Transverse colon (tissue), 4 donors: ENCODE measurements at regions of chr5 and their contacts with region 1.

Region 1: GRCh38 chr5:78537821-78538220 is 110.8 kb downstream of the LHFPL2 start:
- DNase-seq: no peak
- H3K4me3 ChIP-seq: no peak overlapping the region
- H3K27ac ChIP-seq: no peak overlapping the region
- H3K4me1 ChIP-seq: peaks cover 0 to 9% (median 0%) of the 10 kb centered on the region in 4 donors
- H3K27me3 ChIP-seq: no peaks in the 10 kb centered on the region
- CTCF ChIP-seq: peak; percentile 23 to 40 (median 37)
- EP300 ChIP-seq: no peak
- POLR2A ChIP-seq: no peak

Region 2: GRCh38 chr5:78377056-78377717 is 160.6 kb before region 1 on chr5:
- in situ Hi-C with region 1: no loop called
- intact Hi-C with region 1: no loop called
- DNase-seq: no peak
- H3K4me3 ChIP-seq: no peak overlapping the region
- H3K27ac ChIP-seq: no peak overlapping the region
- H3K4me1 ChIP-seq: peaks cover 0 to 9% (median 3%) of the 10 kb centered on the region in 4 donors
- H3K27me3 ChIP-seq: no peaks in the 10 kb centered on the region
- CTCF ChIP-seq: no peak
- EP300 ChIP-seq: no peak
- POLR2A ChIP-seq: no peak

Region 3: DNA sequence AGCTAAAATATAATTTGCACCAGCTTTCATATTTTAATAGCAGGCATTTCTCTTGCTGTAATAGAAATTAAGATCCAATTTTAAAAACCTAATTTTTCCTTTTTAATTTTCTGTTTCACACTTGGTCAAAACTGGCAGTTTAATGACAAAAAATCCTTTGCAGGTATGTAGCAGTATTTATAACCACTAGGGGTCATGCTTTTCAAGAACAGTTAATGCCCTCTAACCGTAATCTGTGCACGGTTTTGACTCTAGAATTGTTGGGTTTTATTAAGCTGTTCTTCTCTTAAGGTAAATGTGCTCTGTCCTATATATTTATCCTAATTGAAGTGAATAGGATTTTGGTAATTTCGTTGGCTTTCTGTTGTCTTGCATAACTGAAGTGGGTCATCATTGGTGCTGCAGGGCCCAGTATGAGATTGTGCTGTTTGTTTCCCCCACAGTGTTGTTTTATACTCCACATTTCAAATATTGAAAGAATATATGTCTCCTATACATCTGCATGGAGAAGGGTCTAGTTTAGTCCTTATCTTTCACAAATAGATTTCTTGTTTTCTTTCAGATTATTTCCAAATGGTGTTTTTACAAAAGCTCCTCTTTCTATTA is 70.0 kb before region 1 on chr5:
- in situ Hi-C with region 1: no loop called
- intact Hi-C with region 1: loop called (anchors 10 kb)
- DNase-seq: no peak
- H3K4me3 ChIP-seq: no peak overlapping the region
- H3K27ac ChIP-seq: no peak overlapping the region
- H3K4me1 ChIP-seq: peaks cover 0 to 5% (median 2%) of the 10 kb centered on the region in 4 donors
- H3K27me3 ChIP-seq: no peaks in the 10 kb centered on the region
- CTCF ChIP-seq: peak; percentile 65 to 79 (median 78)
- EP300 ChIP-seq: no peak
- POLR2A ChIP-seq: no peak

Region 4: DNA sequence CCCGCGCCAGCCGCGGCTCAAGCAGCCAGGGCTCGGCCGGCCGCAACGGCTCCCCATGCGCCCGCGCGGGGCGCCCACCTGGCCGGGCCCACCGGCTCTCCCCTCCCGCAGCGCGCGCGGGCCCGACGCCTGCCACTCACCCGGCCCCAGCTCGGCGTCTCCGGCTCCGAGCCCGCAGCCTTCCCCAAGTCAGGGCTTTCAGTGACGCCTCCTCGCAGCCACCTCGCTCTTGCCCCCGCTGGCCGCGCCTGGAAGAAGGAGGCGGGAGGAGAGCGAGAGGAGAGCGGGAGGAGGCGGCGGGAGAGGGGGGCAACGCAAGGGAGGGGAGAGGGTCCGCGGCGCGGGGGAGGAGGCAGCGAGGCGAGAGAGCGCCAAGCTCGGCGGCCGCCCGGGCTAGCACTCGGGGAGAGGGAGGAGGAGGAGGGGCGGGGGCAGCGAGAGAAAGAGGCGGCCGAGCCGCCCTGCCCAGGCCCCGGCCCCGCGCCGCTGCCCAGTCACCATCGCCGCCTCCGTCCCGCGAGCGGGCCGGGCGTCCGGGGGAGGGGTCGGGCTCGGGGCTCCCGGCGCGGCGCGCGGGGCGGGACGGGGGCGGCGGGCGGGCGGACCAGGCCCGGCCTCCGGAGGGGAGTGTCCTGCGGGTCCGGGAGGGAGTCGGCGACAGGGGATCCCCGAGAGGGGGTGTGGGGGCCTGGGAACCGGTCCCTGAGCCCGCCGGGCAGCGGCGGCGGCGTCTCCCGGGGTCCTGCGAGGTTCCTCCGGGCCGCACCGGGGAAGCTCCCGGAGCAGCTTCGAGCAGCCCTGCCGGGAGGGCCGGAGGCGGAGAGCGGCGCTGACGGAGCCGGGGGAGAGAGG is 110.8 kb after region 1 on chr5 and contains the start of gene LHFPL2:
- in situ Hi-C with region 1: no loop called
- intact Hi-C with region 1: loop called (anchors 5 kb)
- DNase-seq: peak; percentile 76
- H3K4me3 ChIP-seq: peak within 1 kb of the TSS; percentile 80 to 96 (median 87)
- H3K27ac ChIP-seq: peak within 1 kb of the TSS; percentile 94 to 97 (median 96)
- H3K4me1 ChIP-seq: peaks cover 0 to 42% (median 18%) of the 10 kb centered on the region in 4 donors
- H3K27me3 ChIP-seq: no peaks in the 10 kb centered on the region
- CTCF ChIP-seq: no peak
- EP300 ChIP-seq: no peak
- POLR2A ChIP-seq: peak; percentile 56
- total RNA-seq, gene LHFPL2: 34.4 to 79.6 (median 51.5) TPM

Region 5: GRCh38 chr5:78964887-78965286 is 427.1 kb after region 1 on chr5:
- in situ Hi-C with region 1: no loop called
- intact Hi-C with region 1: loop called (anchors 5 kb)
- DNase-seq: no peak
- H3K4me3 ChIP-seq: no peak overlapping the region
- H3K27ac ChIP-seq: no peak overlapping the region
- H3K4me1 ChIP-seq: peaks cover 0 to 10% (median 2%) of the 10 kb centered on the region in 4 donors
- H3K27me3 ChIP-seq: no peaks in the 10 kb centered on the region
- CTCF ChIP-seq: peak; percentile 35 to 63 (median 48)
- EP300 ChIP-seq: no peak
- POLR2A ChIP-seq: no peak

Region 6: GRCh38 chr5:78984439-78985115 is 446.8 kb after region 1 on chr5:
- in situ Hi-C with region 1: loop called in 1 of 4 experiments (anchors 25 kb)
- intact Hi-C with region 1: no loop called
- DNase-seq: peak; percentile 91
- H3K4me3 ChIP-seq: peak overlapping the region; percentile 73 to 97 (median 76)
- H3K27ac ChIP-seq: peak overlapping the region; percentile 97 to 100 (median 98)
- H3K4me1 ChIP-seq: peaks cover 6 to 38% (median 14%) of the 10 kb centered on the region in 4 donors
- H3K27me3 ChIP-seq: no peaks in the 10 kb centered on the region
- CTCF ChIP-seq: peak; percentile 41 to 75 (median 51)
- EP300 ChIP-seq: no peak
- POLR2A ChIP-seq: peak; percentile 38